Gastrocnemius medialis (tissue), 4 donors: ENCODE measurements at regions of chr21 and their contacts with region 1.

Region 1: GRCh38 chr21:35051287-35051818 is 2.3 kb upstream of the RUNX1 start:
- DNase-seq: peak; percentile 88 to 94
- ATAC-seq: peak; percentile 76 to 80
- H3K4me3 ChIP-seq: peak overlapping the region in 1 of 4 donors; percentile 26
- H3K27ac ChIP-seq: peak overlapping the region; percentile 81 to 86 (median 84)
- H3K4me1 ChIP-seq: peaks cover 54 to 63% of the 10 kb centered on the region in 2 donors
- H3K27me3 ChIP-seq: no peaks in the 10 kb centered on the region
- CTCF ChIP-seq: peak; percentile 68 to 80 (median 70)
- POLR2A ChIP-seq: peak in 1 of 2 donors; percentile 10

Region 2: DNA sequence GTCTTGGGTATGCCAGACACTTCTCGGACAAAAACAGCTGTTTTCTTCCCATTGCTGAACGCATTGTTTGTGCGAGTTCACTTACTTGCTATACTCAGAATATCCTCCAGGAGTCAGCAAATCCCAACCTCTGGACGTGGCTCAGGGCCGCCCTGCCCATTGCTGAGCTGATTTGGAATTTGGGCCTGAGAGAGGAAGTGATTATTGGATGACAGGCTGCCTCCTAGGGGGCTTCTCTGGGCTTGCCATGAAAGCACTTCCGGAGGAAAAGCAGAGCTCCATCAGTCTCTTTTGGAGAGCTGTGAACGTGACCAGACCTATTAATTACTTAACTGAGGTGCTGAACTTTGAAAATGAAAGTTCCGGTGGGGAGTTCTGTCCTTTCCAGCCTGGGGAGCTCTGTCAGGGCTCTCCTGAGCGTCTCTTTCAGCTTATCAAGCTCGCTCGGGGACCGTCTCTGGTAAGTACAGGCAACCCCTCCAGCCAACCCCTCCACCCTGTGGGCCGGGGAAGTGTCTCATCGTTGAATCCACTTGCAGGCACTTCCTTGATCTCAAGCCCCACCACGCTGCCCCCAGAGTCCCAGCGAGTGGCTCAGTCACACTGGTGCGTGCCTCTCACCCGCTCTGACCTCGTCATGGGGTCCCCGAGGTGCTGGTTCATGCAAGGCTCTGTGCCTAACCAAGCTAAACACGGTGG is 305.6 kb before region 1 on chr21:
- in situ Hi-C with region 1: loop called in 1 of 4 experiments (anchors 25 kb)
- intact Hi-C with region 1: loop called (anchors 2 kb)
- DNase-seq: peak; percentile 48 to 61
- ATAC-seq: peak; percentile 87 to 90
- H3K4me3 ChIP-seq: peak overlapping the region in 1 of 4 donors; percentile 36
- H3K27ac ChIP-seq: peak overlapping the region in 1 of 4 donors; percentile 55
- H3K4me1 ChIP-seq: peaks cover 5 to 17% of the 10 kb centered on the region in 2 donors
- H3K27me3 ChIP-seq: no peaks in the 10 kb centered on the region
- CTCF ChIP-seq: peak; percentile 80 to 91 (median 88)
- POLR2A ChIP-seq: no peak

Region 3: GRCh38 chr21:34795175-34795547 is 256.2 kb before region 1 on chr21:
- in situ Hi-C with region 1: loop called in 1 of 4 experiments (anchors 25 kb)
- intact Hi-C with region 1: loop called (anchors 5 kb)
- DNase-seq: peak in 1 of 2 donors; percentile 49
- ATAC-seq: peak; percentile 77 to 80
- H3K4me3 ChIP-seq: peak overlapping the region in 1 of 4 donors; percentile 9
- H3K27ac ChIP-seq: peak overlapping the region; percentile 78 to 88 (median 84)
- H3K4me1 ChIP-seq: peaks cover 31 to 42% of the 10 kb centered on the region in 2 donors
- H3K27me3 ChIP-seq: no peaks in the 10 kb centered on the region
- CTCF ChIP-seq: peak in 4 of 5 experiments; percentile 18 to 30 (median 24)
- POLR2A ChIP-seq: no peak

Region 4: DNA sequence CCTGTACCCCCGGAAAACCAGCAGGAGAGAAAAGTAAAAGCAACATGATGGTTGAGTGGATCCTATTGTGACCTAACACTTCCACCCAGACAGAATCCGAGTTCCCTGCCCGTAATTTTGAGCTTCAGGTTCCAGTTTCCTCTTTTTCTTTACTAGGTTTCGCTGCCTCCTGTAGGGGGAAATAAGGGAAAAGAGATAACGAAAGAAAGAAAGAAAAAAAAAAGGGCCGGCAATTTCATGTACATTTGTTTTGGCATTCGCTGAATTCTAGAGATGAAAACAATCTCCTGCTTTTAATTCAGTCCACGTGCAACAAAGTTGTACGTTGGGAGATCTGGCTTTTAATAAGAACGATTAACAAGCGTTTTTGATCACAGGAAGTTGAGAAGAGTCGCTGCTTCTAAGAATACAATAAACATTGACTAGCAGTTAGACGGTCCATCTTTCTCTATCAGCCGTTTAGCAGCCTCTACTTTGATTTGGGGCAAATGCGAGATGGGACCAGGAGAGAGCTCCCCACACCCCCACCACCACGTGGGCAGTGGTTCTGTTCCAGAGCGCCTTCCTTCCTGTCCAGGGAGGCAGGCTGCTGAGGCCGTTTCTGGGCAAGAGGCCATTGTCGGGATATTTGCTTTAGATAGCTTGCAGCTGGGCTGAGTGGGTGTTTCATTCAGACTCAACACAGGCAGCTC is 153.6 kb after region 1 on chr21:
- in situ Hi-C with region 1: no loop called
- intact Hi-C with region 1: loop called (anchors 5 kb)
- DNase-seq: peak in 1 of 2 donors; percentile 49
- ATAC-seq: no peak
- H3K4me3 ChIP-seq: peak overlapping the region in 2 of 4 donors; percentile 8 to 17
- H3K27ac ChIP-seq: peak overlapping the region; percentile 75 to 90 (median 82)
- H3K4me1 ChIP-seq: peaks cover 58 to 82% of the 10 kb centered on the region in 2 donors
- H3K27me3 ChIP-seq: no peaks in the 10 kb centered on the region
- CTCF ChIP-seq: no peak
- POLR2A ChIP-seq: no peak

Region 5: GRCh38 chr21:35265170-35265877 is 214.0 kb after region 1 on chr21:
- in situ Hi-C with region 1: loop called in 1 of 4 experiments (anchors 10 kb)
- intact Hi-C with region 1: no loop called
- DNase-seq: no peak
- ATAC-seq: no peak
- H3K4me3 ChIP-seq: no peak overlapping the region
- H3K27ac ChIP-seq: no peak overlapping the region
- H3K4me1 ChIP-seq: no peaks in the 10 kb centered on the region
- H3K27me3 ChIP-seq: no peaks in the 10 kb centered on the region
- CTCF ChIP-seq: no peak
- POLR2A ChIP-seq: no peak

Region 6: GRCh38 chr21:35400233-35400957 is 349.0 kb after region 1 on chr21:
- in situ Hi-C with region 1: loop called in 3 of 4 experiments (anchors 10 kb)
- intact Hi-C with region 1: loop called (anchors 1 kb)
- DNase-seq: peak in 1 of 2 donors; percentile 8
- ATAC-seq: peak; percentile 93 to 98
- H3K4me3 ChIP-seq: no peak overlapping the region
- H3K27ac ChIP-seq: no peak overlapping the region
- H3K4me1 ChIP-seq: peaks cover 0 to 14% of the 10 kb centered on the region in 2 donors
- H3K27me3 ChIP-seq: no peaks in the 10 kb centered on the region
- CTCF ChIP-seq: peak; percentile 54 to 71 (median 59)
- POLR2A ChIP-seq: no peak